ENCODE measurements at regions of chr22 and their contacts with region 1.

Region 1: DNA sequence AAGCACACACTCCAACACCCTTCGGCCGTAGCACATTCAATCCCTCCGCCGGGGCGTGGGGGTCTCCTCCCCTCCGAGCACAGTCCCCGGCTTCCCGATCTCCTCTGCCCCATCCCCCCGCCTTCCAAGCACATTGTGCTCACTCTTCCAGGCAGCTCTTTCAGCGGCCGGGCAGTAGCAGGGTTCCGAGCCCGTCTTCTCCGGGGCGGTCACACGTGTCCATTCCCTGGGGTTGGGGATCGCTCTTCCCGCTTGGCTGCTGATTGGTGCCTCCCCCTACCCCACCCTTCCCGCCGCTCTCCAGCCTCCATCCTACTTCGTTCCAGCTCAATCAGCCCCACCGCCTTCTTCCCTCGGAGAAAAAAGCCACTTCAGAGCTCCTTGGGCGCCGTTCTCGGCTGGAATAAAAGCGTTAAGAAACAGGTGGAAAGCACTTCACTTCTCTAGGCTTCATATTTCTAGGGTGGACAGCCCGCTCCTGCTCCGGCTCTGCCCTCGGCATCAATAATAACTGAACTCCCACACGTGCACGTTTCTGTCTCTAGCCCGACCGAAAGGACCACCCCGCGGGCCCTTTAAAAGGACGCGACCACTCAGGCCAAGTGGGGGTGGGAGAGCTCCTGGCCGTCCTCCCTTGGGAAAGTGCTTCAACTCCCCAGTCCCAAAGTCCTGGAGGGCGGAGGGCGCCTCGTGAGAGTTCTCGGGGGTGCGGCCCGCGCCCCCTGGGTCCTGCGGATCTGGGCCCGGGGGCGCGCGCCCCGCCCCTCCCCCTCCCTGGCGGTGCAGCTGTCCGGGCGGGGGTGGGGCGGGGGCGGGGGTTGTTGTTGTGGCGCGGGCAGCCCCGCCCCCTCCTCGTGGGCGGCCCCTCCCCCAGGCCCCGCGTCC is 464 bp upstream of the CECR2 start:
- DNase-seq: peak in 41 of 42 donors; percentile 42 to 85 (median 65)

Region 2: DNA sequence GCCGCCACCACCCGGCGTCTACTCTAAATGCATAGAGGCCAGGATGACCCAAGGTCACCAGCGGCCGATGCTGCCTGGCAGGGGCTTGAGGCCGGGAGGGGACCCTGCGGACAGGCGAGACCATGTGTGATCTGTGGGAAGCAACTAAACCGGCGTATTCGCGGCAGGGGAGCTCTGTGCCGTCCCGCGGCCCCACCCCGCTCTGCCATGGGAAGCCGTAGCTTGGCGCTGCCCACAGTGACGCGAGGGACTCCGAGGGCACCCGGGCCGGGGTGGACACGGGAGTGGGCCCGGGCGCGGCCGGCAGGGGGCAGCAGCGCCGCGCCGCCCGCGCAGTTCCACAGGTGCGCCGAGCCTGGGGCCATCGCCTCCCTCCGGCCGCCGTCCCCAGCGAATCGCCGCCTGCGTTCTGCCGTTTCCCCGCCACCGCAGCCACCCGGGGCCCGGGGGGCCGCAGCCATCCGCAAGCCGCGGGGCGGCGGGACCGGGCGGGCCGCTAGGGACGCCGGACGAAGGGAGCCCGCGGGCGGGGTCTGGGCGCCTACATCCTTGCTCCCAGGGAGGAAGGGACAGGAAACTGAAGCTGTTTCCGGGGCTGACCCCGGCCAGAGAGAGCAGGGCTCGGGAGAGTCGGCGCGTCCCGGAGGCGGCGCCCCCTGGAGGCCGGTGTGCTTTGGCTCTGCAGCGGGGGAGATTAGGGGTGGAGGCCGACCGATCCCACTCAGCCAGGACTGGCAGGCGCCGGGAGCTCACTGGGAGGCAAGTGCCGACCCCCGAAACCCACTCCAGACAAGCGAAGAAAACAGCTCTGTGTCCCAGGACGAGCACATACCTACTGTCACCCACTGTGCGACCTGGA is 197.3 kb before region 1 on chr22:
- intact Hi-C with region 1: loop called (anchors 5 kb)
- DNase-seq: peak; percentile 73 to 95 (median 90)

Region 3: GRCh38 chr22:17334059-17334458 is 34.7 kb before region 1 on chr22:
- intact Hi-C with region 1: no loop called
- DNase-seq: no peak

Region 4: DNA sequence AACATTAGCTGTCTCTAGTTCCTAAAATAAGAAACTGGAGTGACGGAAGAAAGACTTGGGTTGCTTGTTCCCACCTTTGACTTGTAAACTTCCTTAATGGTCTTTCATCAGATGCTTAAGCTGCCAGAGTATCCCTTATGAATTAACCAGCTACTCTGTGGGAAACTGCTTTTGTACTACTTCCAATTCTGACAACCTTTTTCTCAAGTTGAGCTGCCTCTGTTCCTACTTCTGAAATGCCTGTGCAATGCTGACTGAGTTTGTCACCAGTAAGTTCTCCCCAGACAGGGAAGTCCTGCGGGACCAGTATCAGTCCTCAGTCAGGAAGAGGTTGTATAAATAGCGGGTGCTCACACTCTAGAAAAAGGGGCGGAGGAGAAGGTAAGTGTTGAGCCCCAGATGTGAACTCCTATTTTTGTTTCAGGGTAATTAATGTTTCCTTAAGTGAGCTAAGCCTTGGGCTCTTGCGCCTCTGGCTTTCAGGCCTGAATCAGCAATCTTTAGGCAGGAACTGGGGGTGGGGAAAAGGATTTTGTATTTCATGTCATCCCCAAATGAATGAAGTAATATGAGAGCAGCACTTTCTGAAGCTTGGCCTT is 67.7 kb after region 1 on chr22:
- intact Hi-C with region 1: loop called (anchors 5 kb)
- DNase-seq: peak in 14 of 42 donors; percentile 14 to 61 (median 31)

Region 5: DNA sequence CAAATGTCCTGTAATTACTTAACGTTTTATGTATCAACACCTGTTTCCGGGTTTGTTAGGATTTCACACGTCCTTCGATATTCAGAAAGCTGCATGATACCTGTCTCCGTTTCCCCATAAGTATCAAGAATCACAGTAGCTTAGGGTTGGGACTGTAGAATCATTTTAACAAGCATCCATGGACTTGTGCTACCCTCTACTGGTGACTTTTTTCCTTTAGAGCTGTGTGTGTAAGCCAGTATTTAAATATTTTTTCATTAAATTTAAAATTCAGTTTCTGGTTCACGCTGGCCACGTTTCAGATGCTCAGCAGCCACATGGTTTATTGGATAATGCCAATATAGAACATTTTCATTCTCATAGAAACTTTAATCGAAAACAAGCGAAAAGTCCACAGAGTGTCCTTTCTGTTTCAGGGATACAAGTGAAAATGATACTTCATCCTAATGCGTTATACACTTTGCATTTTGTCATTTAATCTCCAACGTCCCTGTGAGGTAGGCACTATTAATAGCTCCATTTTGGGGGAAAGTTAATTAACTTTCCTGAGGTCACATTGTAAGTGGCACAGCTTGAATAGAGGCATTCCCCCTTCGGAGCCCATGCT is 133.0 kb after region 1 on chr22:
- intact Hi-C with region 1: loop called (anchors 5 kb)
- DNase-seq: peak in 20 of 42 donors; percentile 5 to 79 (median 40)

Measured in head of caudate nucleus (tissue), 42 donors.